GM12878 (cell line): ENCODE measurements at regions of chr1 and their contacts with region 1.

Region 1: GRCh38 chr1:157505481-157506272 is 46.6 kb downstream of the FCRL5 start:
- DNase-seq: peak; percentile 59
- ATAC-seq: peak; percentile 99
- H3K4me3 ChIP-seq: 0 out of 2 replicates have a peak overlapping the region, but pooled peaks have one; percentile 26
- H3K27ac ChIP-seq: peak overlapping the region; percentile 48
- H3K4me1 ChIP-seq: peaks cover 31% of the 10 kb centered on the region
- H3K27me3 ChIP-seq: no peaks in the 10 kb centered on the region
- CTCF ChIP-seq: peak; percentile 86 to 91 (median 86)
- EP300 ChIP-seq: no peak
- POLR2A ChIP-seq: no peak
- RAD21 ChIP-seq: peak; percentile 90

Region 2: GRCh38 chr1:157176591-157177121 is 329.0 kb before region 1 on chr1:
- CTCF ChIA-PET with region 1: interaction called, 13 read pairs
- POLR2A ChIA-PET with region 1: no interaction called
- RAD21 ChIA-PET with region 1: interaction called, 7 read pairs
- SMC1A ChIA-PET with region 1: interaction called, 5 read pairs
- in situ Hi-C with region 1: no loop called
- intact Hi-C with region 1: no loop called
- DNase-seq: peak; percentile 71
- ATAC-seq: peak; percentile 67
- H3K4me3 ChIP-seq: no peak overlapping the region
- H3K27ac ChIP-seq: peak overlapping the region; percentile 51
- H3K4me1 ChIP-seq: peaks cover 62% of the 10 kb centered on the region
- H3K27me3 ChIP-seq: no peaks in the 10 kb centered on the region
- CTCF ChIP-seq: no peak
- EP300 ChIP-seq: peak; percentile 14 to 43; a peak in 2 of 4 replicates
- POLR2A ChIP-seq: no peak
- RAD21 ChIP-seq: no peak

Region 3: GRCh38 chr1:157380523-157380922 is 125.2 kb before region 1 on chr1:
- CTCF ChIA-PET with region 1: interaction called, 37 read pairs
- POLR2A ChIA-PET with region 1: no interaction called
- RAD21 ChIA-PET with region 1: interaction called, 29 read pairs
- SMC1A ChIA-PET with region 1: interaction called, 12 read pairs
- in situ Hi-C with region 1: no loop called
- intact Hi-C with region 1: no loop called
- DNase-seq: no peak
- ATAC-seq: peak; percentile 45
- H3K4me3 ChIP-seq: no peak overlapping the region
- H3K27ac ChIP-seq: no peak overlapping the region
- H3K4me1 ChIP-seq: no peaks in the 10 kb centered on the region
- H3K27me3 ChIP-seq: no peaks in the 10 kb centered on the region; a peak in 1 of 4 replicates
- CTCF ChIP-seq: no peak
- EP300 ChIP-seq: no peak
- POLR2A ChIP-seq: no peak
- RAD21 ChIP-seq: no peak

Region 4: DNA sequence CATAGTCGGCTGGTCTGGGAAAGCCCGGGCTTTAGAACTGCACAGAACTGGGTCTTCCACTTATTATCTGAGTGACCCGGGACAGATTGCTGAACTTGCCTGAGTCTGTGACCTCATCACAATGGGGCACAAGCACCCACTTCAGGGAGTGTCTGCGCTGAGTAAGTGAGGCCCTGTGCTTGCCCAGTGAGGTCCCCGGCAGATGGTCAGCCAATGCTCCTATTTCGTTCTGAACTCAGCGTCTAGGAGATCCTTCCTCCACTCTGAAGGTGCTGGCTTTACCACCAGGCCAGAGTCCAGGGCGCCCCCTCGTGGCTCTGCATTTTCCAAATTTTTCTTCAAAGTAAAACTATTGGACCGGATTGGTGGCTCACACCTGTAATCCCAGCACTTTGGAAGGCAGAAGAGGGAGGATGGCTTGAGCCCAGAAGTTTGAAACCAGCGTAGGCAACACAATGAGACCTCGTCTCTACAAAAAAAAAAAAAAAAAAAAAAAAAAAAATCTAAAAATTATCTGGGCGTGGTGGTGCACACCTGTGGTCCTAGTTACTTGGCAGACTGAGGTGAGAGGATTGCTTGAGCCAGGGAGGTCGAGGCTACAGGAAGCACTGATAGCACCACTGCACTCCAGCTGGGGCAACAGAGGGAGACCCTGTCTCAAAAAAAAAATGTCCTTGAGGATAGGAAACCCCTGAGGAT is 15.1 kb before region 1 on chr1:
- CTCF ChIA-PET with region 1: interaction called, 196 read pairs
- POLR2A ChIA-PET with region 1: interaction called, 5 read pairs
- RAD21 ChIA-PET with region 1: interaction called, 62 read pairs
- SMC1A ChIA-PET with region 1: interaction called, 69 read pairs
- in situ Hi-C with region 1: no loop called
- intact Hi-C with region 1: no loop called
- DNase-seq: no peak
- ATAC-seq: peak; percentile 77
- H3K4me3 ChIP-seq: no peak overlapping the region
- H3K27ac ChIP-seq: no peak overlapping the region
- H3K4me1 ChIP-seq: no peaks in the 10 kb centered on the region
- H3K27me3 ChIP-seq: 0 out of 4 replicates have a peak, but pooled peaks cover 0 to 2% of the 10 kb centered on the region in 2 experiments
- CTCF ChIP-seq: peak; percentile 67 to 73 (median 70)
- EP300 ChIP-seq: no peak
- POLR2A ChIP-seq: no peak
- RAD21 ChIP-seq: peak; percentile 67

Region 5: GRCh38 chr1:157551694-157552637 is 46.3 kb after region 1 on chr1 and contains the start of gene FCRL5:
- CTCF ChIA-PET with region 1: interaction called, 19 read pairs
- POLR2A ChIA-PET with region 1: interaction called, 5 read pairs
- RAD21 ChIA-PET with region 1: interaction called, 22 read pairs
- SMC1A ChIA-PET with region 1: interaction called, 26 read pairs
- in situ Hi-C with region 1: no loop called
- intact Hi-C with region 1: no loop called
- DNase-seq: peak; percentile 33
- ATAC-seq: peak; percentile 90
- H3K4me3 ChIP-seq: peak within 1 kb of the TSS; percentile 62
- H3K27ac ChIP-seq: peak within 1 kb of the TSS; percentile 34
- H3K4me1 ChIP-seq: peaks cover 15% of the 10 kb centered on the region
- H3K27me3 ChIP-seq: no peaks in the 10 kb centered on the region; a peak in 1 of 4 replicates
- CTCF ChIP-seq: no peak
- EP300 ChIP-seq: peak in 1 of 2 experiments; percentile 75; a peak in 2 of 4 replicates
- POLR2A ChIP-seq: no peak
- RAD21 ChIP-seq: no peak
- polyA plus RNA-seq, gene FCRL5: 2.6 to 5.7 TPM